Posterior vena cava (tissue), 2 donors: ENCODE measurements at regions of chr6 and their contacts with region 1.

Region 1: GRCh38 chr6:37489660-37490361 is 9.9 kb downstream of the CCDC167 start:
- DNase-seq: no peak

Region 2: GRCh38 chr6:36839749-36840431 is 649.9 kb before region 1 on chr6:
- intact Hi-C with region 1: no loop called
- DNase-seq: peak; percentile 86

Region 3: DNA sequence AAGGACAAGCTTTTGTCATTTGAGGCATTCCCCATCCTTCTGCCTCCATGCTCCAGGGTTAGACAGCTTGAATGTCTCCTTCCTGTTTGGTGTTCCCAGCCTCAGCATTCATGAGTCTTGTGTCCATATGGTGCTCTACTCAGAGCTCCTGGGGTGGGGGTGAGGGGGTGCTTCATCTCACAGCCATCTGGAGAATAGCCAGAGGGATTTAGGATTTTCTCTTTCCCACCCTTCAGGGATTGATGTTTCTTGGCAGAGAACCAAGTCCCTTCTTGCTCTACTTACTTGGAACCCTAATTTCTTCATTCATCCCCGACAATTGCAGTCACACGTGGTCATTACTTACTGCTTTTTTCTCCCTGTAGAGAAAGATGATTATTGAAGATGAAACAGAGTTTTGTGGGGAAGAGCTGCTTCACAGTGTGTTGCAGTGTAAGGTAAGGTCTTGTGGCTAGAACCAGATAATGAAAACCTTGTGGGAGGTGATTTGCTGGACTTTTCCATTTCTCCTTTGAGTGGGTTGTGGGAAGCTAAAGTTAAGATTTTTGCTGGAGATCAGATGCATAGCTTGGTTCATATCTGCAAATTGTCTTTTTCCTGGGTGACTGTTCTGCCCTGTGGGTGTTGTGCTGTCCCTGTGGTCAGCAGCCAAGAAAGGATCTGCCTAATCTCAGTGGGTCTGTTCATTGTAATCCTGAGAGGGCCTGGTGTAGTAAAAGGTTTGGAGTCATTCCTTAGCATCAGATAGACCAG is 38.2 kb before region 1 on chr6:
- intact Hi-C with region 1: loop called in 1 of 2 experiments (anchors 2 kb)
- DNase-seq: no peak

Region 4: GRCh38 chr6:38477680-38478260 is 988.0 kb after region 1 on chr6:
- intact Hi-C with region 1: loop called in 1 of 2 experiments (anchors 5 kb)
- DNase-seq: no peak